CD8-positive, alpha-beta memory T cell (primary cell): ENCODE measurements at regions of chr6 and their contacts with region 1.

Region 1: DNA sequence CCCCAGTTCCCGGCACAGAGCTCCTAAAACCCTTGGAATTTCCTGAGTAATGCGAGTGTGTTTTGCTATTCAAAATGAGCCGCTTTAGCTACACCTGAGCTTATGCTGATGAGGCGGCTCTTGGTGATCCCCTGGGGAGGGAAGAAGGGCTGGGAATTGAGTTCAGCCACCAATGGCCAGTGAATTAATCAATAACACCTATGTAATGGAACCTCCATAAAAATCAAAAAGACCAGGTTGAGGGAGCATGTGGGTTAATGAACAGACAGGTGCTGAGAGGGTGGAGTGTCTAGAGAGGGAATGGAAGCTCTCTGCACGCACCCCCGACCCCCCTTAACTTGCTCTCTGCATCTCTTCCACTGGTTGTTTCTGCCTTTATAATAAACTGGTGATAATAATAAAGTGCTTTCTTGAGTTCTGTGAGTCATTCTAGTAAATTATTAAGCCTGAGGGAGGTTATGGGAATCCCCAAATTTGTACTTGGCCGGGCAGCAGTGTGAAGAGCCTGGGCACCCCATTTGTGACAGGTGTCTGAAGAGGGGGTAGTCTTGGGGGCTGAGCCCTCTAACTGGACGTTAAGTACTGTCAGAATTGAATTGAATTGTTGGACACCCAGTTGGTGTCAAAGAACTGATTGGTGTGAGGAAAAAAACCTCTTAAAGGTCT is 24.7 kb upstream of the SERPINB1 start:
- DNase-seq: no peak
- H3K4me3 ChIP-seq: no peak overlapping the region
- H3K4me3 Mint-ChIP-seq: no peak overlapping the region
- H3K27ac ChIP-seq: no peak overlapping the region
- H3K27ac Mint-ChIP-seq: peak overlapping the region in 4 of 8 donors; percentile 10 to 89 (median 63)
- H3K4me1 ChIP-seq: peaks cover 35% of the 10 kb centered on the region
- H3K4me1 Mint-ChIP-seq: peaks cover 40 to 68% (median 53%) of the 10 kb centered on the region in 3 donors
- H3K27me3 ChIP-seq: no peaks in the 10 kb centered on the region
- H3K27me3 Mint-ChIP-seq: no peaks in the 10 kb centered on the region

Region 2: DNA sequence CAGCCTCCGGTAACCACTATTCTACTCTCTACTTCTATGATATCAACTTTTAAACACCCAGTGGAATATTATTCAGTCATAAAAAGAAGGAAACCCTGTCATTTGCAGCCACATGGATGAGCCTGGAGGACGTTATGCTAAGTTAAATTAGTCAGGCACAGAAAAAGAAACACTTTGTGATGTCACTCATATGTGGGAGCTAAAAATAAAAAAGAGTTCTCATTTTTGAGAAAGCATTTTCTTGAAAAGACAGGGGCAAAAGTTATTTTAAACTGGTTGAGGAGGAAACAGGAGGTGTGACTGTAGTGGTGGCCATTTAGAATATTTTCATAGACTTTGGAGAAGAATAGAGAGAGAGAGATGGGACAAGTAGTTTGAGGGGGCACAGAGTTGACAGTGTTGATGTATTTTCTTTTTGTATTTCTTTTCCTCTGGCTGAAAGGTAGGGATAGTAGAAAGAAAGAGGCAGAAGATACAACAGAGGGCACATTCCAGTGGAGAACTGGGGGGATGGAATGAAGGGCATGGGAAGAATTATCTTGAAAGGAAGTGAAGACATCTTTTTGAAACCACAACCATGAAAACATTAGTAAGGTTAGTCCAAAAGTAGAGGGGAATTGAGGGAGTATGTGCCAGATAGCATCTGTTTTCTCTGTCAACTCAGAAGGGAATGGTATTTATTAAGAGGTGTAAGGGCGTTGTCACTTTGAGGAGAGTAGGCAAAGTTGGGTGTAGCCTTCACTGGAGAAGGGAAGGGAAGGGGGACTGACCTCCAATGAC is 439.6 kb before region 1 on chr6:
- CTCF ChIA-PET with region 1: no interaction called
- POLR2A ChIA-PET with region 1: no interaction called
- DNase-seq: no peak
- H3K4me3 ChIP-seq: no peak overlapping the region
- H3K4me3 Mint-ChIP-seq: no peak overlapping the region
- H3K27ac ChIP-seq: no peak overlapping the region
- H3K27ac Mint-ChIP-seq: no peak overlapping the region
- H3K4me1 ChIP-seq: no peaks in the 10 kb centered on the region
- H3K4me1 Mint-ChIP-seq: no peaks in the 10 kb centered on the region
- H3K27me3 ChIP-seq: no peaks in the 10 kb centered on the region
- H3K27me3 Mint-ChIP-seq: peaks cover 0 to 7% of the 10 kb centered on the region in 2 donors

Region 3: GRCh38 chr6:2876210-2877056 is 10.1 kb after region 1 on chr6:
- CTCF ChIA-PET with region 1: interaction called, 6 read pairs
- POLR2A ChIA-PET with region 1: interaction called, 37 read pairs
- DNase-seq: peak in 1 of 5 donors; percentile 25
- H3K4me3 ChIP-seq: peak overlapping the region; percentile 34
- H3K4me3 Mint-ChIP-seq: peak overlapping the region; percentile 74 to 95 (median 85)
- H3K27ac ChIP-seq: no peak overlapping the region
- H3K27ac Mint-ChIP-seq: peak overlapping the region; percentile 88 to 98 (median 95)
- H3K4me1 ChIP-seq: peaks cover 64% of the 10 kb centered on the region
- H3K4me1 Mint-ChIP-seq: peaks cover 71 to 85% (median 83%) of the 10 kb centered on the region in 3 donors
- H3K27me3 ChIP-seq: no peaks in the 10 kb centered on the region
- H3K27me3 Mint-ChIP-seq: no peaks in the 10 kb centered on the region